B cell (primary cell): ENCODE measurements at regions of chr16 and their contacts with region 1.

Region 1: DNA sequence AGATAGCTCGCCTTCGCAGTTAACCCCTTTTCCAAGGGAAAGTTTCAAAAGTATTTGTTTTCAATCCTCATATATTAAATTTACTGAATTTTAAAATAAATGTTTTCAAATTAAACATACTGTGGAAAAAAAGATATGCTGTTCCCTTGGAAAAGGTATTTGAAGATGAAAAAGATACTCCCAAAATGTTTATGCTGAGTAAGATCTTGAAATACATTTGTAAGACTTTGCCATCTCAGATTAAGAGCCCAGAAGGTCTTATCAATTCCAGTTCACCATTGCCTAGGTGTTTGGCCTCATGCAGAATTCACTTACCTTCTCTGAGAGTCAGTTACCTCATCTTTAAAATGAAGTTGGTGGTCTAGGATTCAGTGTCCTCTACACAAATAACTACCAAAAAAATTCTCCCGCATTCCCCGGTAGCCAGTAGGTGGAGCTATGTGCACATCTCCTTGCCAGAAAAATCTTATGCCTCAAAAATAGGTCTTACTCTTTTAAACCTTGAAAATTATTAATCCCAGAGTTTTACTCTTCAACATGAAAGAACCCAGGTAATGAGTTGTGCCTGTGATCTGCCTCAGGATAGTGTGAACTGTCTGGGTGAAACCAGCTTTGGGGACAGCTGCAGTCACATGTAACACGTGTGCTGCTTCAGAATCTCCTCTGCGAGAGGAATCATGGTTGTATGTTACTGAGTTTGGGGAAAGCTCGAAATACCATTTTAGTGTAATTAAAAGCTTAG is 178.3 kb downstream of the MRTFB start:
- DNase-seq: peak; percentile 66
- ATAC-seq: no peak
- H3K4me3 ChIP-seq: no peak overlapping the region
- H3K4me3 Mint-ChIP-seq: no peak overlapping the region
- H3K27ac ChIP-seq: no peak overlapping the region
- H3K27ac Mint-ChIP-seq: no peak overlapping the region
- H3K4me1 ChIP-seq: no peaks in the 10 kb centered on the region
- H3K4me1 Mint-ChIP-seq: no peaks in the 10 kb centered on the region
- H3K27me3 ChIP-seq: no peaks in the 10 kb centered on the region
- H3K27me3 Mint-ChIP-seq: no peaks in the 10 kb centered on the region
- CTCF ChIP-seq: peak; percentile 95

Region 2: GRCh38 chr16:14529010-14529669 is 279.7 kb after region 1 on chr16:
- CTCF ChIA-PET with region 1: interaction called, 81 read pairs
- POLR2A ChIA-PET with region 1: no interaction called
- intact Hi-C with region 1: loop called (anchors 1 kb)
- DNase-seq: peak; percentile 66
- ATAC-seq: no peak
- H3K4me3 ChIP-seq: no peak overlapping the region
- H3K4me3 Mint-ChIP-seq: no peak overlapping the region
- H3K27ac ChIP-seq: no peak overlapping the region
- H3K27ac Mint-ChIP-seq: peak overlapping the region; percentile 12
- H3K4me1 ChIP-seq: peaks cover 0 to 2% of the 10 kb centered on the region in 2 donors
- H3K4me1 Mint-ChIP-seq: peaks cover 6% of the 10 kb centered on the region
- H3K27me3 ChIP-seq: no peaks in the 10 kb centered on the region
- H3K27me3 Mint-ChIP-seq: no peaks in the 10 kb centered on the region
- CTCF ChIP-seq: peak; percentile 81

Region 3: GRCh38 chr16:14600164-14600563 is 350.7 kb after region 1 on chr16:
- CTCF ChIA-PET with region 1: interaction called, 11 read pairs
- POLR2A ChIA-PET with region 1: no interaction called
- intact Hi-C with region 1: no loop called
- DNase-seq: peak; percentile 31
- ATAC-seq: no peak
- H3K4me3 ChIP-seq: no peak overlapping the region
- H3K4me3 Mint-ChIP-seq: no peak overlapping the region
- H3K27ac ChIP-seq: no peak overlapping the region
- H3K27ac Mint-ChIP-seq: no peak overlapping the region
- H3K4me1 ChIP-seq: no peaks in the 10 kb centered on the region
- H3K4me1 Mint-ChIP-seq: peaks cover 3% of the 10 kb centered on the region
- H3K27me3 ChIP-seq: no peaks in the 10 kb centered on the region
- H3K27me3 Mint-ChIP-seq: no peaks in the 10 kb centered on the region
- CTCF ChIP-seq: peak; percentile 69